Left colon (tissue), 2 donors: ENCODE measurements at regions of chr12 and their contacts with region 1.

Region 1: DNA sequence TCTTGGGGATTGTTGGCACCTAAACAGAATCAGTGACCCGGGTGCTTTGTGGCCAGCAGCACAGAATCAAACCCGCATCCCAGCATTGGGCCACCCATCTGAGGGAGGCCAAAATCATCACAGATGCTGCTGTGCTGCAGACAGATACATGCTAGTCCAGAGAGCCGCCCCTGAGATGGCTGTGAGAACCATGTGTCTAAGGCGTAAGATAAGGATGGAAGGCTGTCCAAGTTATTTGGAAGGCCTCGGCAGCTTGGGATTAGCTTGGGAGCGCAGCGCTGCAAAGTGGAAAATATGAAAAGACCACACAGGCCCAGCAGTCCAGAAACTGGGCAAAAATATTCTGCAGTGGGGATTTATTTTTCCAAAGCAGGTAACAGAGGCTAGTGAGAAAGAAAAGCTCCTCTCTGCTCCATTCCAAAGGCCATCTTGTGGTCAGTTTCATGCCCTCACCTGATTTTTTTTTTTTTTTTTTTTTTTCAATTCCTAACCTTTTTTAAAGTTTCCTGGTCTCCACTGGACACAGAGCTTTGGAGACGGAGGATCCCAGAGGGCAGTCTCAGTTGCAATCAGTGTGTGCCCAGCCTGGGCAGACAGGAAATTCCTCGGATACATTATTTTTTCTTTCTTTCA is 178.9 kb upstream of the BCL2L14 start:
- DNase-seq: no peak
- ATAC-seq: no peak

Region 2: DNA sequence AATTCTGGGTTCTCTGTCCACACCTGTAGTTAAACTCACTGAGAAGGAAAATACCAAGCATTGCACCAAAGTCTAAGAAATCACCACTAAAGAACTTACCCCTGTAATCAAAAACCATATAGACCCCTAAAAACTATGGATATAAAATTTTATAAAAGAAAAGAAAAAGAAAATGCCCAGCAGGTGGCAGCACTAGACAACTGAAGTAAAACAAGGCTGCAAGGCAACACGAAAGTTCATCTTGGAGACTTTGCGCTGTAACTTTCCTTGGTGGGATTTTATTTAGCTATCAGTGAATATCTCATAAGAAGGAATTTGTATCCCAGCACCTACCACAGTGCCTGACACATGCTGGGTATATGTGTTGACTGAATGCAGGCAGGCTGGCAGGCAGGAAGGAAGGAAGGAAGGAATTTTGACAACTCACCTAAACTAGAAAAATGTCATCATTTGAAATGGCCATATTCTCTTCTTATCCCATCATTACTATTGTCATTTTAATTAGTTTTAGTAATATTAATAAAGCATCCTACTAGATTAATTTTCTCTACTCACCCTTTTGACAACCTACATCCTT is 310.6 kb before region 1 on chr12:
- intact Hi-C with region 1: loop called in 1 of 2 experiments (anchors 10 kb)
- DNase-seq: peak; percentile 41 to 85
- ATAC-seq: peak; percentile 39

Region 3: DNA sequence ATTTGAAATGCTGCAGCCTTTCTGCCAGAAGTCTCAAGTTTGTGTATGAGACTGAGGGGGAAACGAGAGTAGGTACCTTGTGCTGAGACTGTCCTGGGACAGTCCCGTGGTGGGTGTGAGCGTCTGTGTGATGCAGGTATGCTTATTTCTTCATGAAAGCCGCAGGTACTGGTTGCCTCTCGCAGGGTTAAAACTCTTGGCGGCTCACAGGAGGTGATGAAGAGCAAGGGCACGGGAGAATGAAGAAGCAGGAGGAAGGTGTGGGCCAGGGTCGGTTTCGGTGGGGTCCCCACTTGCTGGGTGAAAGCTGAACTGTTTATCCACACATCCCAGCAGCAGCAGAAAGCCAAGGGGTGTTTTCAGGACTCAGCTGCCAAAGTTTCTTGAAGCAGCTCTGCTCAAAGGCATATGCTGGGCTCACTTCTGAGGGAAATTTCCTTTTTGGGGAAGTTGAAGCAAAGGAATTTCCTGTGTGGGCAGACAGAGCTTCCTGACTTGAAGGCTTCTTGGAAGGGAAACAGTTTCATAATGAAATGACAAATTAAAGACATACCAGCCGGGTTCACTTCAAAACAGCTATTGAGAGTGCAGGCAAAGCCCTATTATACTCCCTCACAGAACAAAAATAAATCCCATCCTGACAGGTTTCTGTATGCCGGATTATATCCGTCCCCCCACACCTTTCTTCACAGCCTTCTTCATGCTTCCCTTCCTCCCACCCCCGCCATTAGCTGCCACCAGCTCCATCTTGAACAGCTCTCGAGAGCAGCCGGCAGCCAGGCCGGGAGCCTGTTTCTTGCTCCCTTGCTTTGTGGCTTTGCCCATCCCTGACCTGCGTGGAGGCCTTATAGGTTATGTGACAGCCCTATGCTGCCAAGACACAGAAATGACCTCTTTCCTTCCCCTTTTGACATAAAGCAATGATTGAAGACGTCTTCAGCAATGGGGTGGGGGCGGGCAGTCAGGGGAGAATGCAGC is 125.8 kb before region 1 on chr12:
- intact Hi-C with region 1: no loop called
- DNase-seq: peak; percentile 30 to 39
- ATAC-seq: no peak

Region 4: GRCh38 chr12:12010277-12011039 is 118.6 kb after region 1 on chr12:
- intact Hi-C with region 1: loop called in 1 of 2 experiments (anchors 10 kb)
- DNase-seq: peak; percentile 40 to 59
- ATAC-seq: peak; percentile 25